ENCODE measurements at regions of chr2 and their contacts with region 1.

Region 1: DNA sequence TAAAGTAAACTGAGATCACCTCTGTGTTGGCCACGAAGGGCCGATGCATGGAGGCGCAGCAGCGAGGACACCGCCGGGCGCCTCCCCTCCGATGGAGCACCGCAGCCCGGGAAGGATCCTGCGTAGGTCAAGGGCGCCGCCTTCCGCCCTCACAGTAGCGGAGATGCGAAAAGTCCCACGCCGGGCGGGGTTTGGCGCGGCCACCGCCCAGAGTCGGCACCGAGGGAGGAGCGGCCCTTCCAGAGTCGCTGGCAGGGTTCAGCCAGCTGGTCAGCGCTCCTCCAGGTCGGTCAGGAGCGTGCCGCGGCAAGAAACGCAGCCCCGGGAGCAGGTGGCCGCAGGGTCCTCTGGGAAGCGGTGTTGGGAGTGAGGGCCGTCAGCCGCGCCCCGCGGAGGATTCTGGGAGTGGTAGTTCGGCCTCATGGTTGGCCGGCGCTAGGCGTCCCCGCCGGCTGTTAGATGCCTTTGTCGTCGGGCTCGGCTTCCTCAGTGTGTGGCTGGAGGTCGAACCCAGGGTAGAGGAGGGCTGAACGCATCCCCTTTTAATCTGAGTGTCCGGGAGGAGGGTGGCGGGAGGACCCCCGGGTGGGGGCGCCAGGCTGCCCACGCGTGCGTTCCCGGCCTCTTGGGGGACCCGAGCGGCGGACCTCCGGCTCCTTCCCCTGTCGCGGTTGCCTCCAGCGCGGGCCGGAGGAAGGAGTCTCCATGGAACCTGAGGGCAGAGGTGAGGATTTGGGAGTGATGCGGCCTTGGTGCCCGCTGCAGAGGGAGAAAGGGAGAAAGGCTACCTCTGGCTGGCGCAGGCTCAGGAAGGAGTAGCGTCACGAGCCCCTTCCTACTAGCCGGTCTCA is at the start of gene ZNF892:
- DNase-seq: peak; percentile 58
- H3K4me3 ChIP-seq: peak within 1 kb of the TSS; percentile 79
- H3K27ac ChIP-seq: peak within 1 kb of the TSS; percentile 52
- H3K27me3 ChIP-seq: peaks cover 2% of the 10 kb centered on the region
- CTCF ChIP-seq: peak; percentile 28
- polyA plus RNA-seq, gene ZNF892: 1.6 TPM in 2 replicates

Region 2: GRCh38 chr2:95231723-95232122 is 24.4 kb after region 1 on chr2:
- CTCF ChIA-PET with region 1: interaction called, 11 read pairs
- POLR2A ChIA-PET with region 1: no interaction called
- DNase-seq: no peak
- H3K4me3 ChIP-seq: no peak overlapping the region
- H3K27ac ChIP-seq: no peak overlapping the region
- H3K27me3 ChIP-seq: no peaks in the 10 kb centered on the region
- CTCF ChIP-seq: peak; percentile 56

Region 3: DNA sequence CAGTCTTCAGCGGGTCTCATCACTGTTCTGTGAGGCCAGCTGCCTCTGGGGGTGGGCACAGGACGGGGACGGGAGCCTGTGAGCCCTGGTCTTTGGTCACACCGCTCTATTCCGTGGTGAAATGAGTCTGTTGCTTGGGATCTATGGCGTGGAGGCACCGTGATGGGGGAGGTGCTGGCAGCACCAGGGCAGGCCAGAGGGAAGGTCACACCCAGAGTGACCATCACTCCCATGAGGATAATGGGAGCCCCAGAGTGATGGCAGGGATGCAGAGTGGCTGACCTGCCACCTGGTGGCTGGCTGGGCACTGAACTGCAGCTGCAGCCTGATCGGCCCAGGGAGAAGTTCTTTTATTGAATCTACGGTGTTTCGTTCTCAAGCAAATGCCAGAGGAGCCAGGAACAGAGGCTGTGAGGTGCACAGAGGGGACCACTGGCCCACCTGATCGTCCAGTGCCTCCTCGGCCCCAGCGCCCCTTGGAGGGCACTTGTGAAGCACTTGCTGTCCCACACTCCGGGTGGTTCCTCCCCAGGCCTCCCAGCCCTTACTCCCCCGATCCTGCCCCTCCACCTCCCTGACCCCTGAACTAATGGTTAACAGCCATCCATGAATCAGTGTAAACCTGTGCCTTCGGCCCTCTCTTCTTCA is 107.8 kb after region 1 on chr2:
- CTCF ChIA-PET with region 1: no interaction called
- POLR2A ChIA-PET with region 1: no interaction called
- DNase-seq: no peak
- H3K4me3 ChIP-seq: no peak overlapping the region
- H3K27ac ChIP-seq: no peak overlapping the region
- H3K27me3 ChIP-seq: peaks cover 10% of the 10 kb centered on the region
- CTCF ChIP-seq: peak; percentile 42; the same call in 1 of the 2 replicates

Measured in AG04450 (cell line).